Activated T-helper 1 cell treated with anti-CD3 and anti-CD28 coated beads, Interleukin-12 subunit alpha, Interleukin-12 subunit beta, Interleukin-2, Interleukin-4 antibody, amounts not matched to agents 30 ng/mL and 10 ng/mL and 1 ng/mL, durations not matched to agents 14 hours and 24 hours and 36 hours (primary cell): ENCODE measurements at regions of chr3 and their contacts with region 1.

Region 1: DNA sequence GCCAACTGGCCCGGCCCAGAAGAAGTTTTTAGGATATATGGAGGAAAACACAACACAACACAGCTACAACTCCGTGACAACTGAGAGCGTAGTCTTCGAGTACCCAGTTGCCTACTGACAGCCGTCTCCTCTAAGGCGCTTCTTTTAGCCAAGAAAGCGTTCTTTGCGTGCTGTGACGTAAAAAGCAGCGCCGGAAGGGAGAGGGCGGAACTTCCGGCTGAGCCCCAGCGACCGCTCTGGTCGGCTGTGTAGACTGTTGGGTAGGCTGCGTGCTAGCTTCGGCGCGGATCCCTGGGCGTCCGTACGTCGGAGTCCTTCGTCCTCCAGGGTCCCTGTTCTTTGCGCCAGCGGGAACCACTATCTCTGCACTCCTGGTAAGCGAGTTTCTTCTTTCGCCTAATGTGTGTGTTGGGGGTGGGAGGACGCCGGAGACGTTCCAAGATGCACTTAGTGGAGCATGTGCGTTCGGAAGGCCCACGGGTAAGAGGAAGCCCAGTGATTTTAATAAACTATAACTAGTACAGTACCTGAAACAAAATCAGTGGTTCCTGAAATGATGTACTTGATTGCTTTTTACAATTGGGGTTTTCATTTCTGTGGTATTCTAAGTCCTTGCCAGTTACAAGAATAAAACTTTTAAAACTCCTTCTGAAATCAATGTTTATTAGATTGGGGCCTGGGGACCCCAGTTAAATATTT is at the start of gene TRMT10C:
- DNase-seq: peak; percentile 89
- H3K4me3 Mint-ChIP-seq: peak within 1 kb of the TSS; percentile 99
- H3K27ac Mint-ChIP-seq: peak within 1 kb of the TSS; percentile 98
- H3K4me1 Mint-ChIP-seq: peaks cover 34% of the 10 kb centered on the region
- H3K27me3 Mint-ChIP-seq: peaks cover 4% of the 10 kb centered on the region
- total RNA-seq, gene TRMT10C: 59.9 and 60.5 TPM in 2 replicates

Region 2: GRCh38 chr3:101391413-101391950 is 170.3 kb before region 1 on chr3:
- intact Hi-C with region 1: loop called (anchors 5 kb)
- DNase-seq: no peak
- H3K4me3 Mint-ChIP-seq: no peak overlapping the region
- H3K27ac Mint-ChIP-seq: no peak overlapping the region
- H3K4me1 Mint-ChIP-seq: peaks cover 27% of the 10 kb centered on the region
- H3K27me3 Mint-ChIP-seq: no peaks in the 10 kb centered on the region

Region 3: GRCh38 chr3:101518421-101518871 is 43.3 kb before region 1 on chr3:
- intact Hi-C with region 1: loop called (anchors 1 kb)
- DNase-seq: peak; percentile 63
- H3K4me3 Mint-ChIP-seq: peak overlapping the region; percentile 32
- H3K27ac Mint-ChIP-seq: peak overlapping the region; percentile 77
- H3K4me1 Mint-ChIP-seq: peaks cover 49% of the 10 kb centered on the region
- H3K27me3 Mint-ChIP-seq: no peaks in the 10 kb centered on the region

Region 4: DNA sequence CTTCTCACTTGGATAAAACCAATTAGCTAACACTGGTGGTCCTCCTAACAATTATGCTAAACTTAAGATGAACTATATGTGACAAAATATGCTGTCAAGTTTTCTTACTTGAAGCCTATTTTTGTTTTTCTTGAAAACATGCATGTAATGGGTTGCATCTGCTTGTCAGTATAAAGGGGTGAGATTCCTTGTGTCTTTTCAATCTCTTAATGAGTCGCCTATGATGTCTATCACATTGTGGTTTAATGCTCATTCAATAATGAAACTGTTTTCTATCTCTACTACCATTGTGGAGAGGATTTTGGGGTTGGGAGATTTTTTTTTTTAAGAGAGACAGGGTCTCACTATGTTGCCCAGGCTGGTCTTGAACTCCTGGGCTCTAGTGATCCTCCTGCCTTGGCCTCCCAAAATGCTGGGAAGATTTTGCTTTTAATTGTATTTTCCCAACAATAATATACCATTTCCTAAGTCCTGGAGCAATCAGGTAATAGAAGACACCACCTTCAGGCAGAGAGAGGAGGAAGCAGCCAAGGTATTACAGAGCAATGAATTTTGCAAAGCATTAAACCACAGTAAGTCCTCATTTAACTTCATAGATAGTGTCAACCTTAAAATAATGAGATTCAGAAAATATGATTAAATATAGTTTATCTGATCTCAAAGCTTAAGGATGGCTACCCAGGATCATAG is 17.5 kb before region 1 on chr3:
- intact Hi-C with region 1: loop called (anchors 1 kb)
- DNase-seq: no peak
- H3K4me3 Mint-ChIP-seq: no peak overlapping the region
- H3K27ac Mint-ChIP-seq: peak overlapping the region; percentile 71
- H3K4me1 Mint-ChIP-seq: peaks cover 29% of the 10 kb centered on the region
- H3K27me3 Mint-ChIP-seq: no peaks in the 10 kb centered on the region